AG04449 (cell line): ENCODE measurements at regions of chr12 and their contacts with region 1.

Region 1: GRCh38 chr12:127677537-127678131 is 589.3 kb upstream of the TMEM132C start:
- DNase-seq: peak; percentile 34
- H3K4me3 ChIP-seq: no peak overlapping the region
- CTCF ChIP-seq: peak; percentile 76

Region 2: GRCh38 chr12:126424696-126425095 is 1252.9 kb before region 1 on chr12:
- CTCF ChIA-PET with region 1: no interaction called
- POLR2A ChIA-PET with region 1: no interaction called
- DNase-seq: no peak
- H3K4me3 ChIP-seq: no peak overlapping the region
- CTCF ChIP-seq: no peak

Region 3: GRCh38 chr12:127108360-127109215 is 569.0 kb before region 1 on chr12:
- CTCF ChIA-PET with region 1: interaction called, 27 read pairs
- POLR2A ChIA-PET with region 1: no interaction called
- DNase-seq: no peak
- H3K4me3 ChIP-seq: no peak overlapping the region
- CTCF ChIP-seq: peak; percentile 63

Region 4: GRCh38 chr12:127455347-127456265 is 222.0 kb before region 1 on chr12:
- CTCF ChIA-PET with region 1: interaction called, 11 read pairs
- POLR2A ChIA-PET with region 1: no interaction called
- DNase-seq: no peak
- H3K4me3 ChIP-seq: peak overlapping the region; percentile 38
- CTCF ChIP-seq: peak; percentile 9

Region 5: DNA sequence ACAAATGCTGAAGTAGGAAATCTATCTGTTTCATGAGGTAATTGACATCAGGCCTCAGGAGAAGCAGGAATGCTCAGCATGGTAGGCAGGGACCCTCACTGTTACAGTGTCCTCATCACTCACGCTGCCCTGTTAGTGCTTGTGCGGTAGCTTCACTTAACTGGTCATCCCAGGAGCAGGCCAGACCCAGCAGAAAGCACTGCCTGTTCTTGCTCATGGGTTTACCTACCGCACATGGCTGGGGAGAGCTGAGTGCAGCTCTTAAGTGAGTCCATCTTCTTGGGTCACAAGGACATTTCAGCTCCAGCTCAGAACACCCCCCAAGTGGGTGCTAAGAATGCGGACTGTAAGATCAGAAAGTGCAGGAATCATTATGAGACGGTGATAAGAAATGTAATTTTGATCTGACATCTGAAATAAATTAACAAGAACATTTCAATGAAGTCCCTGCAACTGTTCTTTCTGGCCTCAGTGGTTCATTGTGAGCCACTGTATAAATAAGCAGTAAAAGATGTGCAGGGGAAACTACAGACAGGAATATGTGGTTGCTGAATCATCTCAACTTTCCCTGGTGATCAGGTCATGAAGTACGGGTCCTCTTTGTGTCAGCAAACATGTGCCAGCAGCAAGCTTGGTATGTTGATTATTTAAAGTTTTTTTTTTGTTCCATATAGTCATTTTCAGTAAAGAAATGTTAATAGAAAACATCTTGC is 168.4 kb before region 1 on chr12:
- CTCF ChIA-PET with region 1: interaction called, 27 read pairs
- POLR2A ChIA-PET with region 1: no interaction called
- DNase-seq: peak; percentile 96
- H3K4me3 ChIP-seq: no peak overlapping the region
- CTCF ChIP-seq: no peak

Region 6: DNA sequence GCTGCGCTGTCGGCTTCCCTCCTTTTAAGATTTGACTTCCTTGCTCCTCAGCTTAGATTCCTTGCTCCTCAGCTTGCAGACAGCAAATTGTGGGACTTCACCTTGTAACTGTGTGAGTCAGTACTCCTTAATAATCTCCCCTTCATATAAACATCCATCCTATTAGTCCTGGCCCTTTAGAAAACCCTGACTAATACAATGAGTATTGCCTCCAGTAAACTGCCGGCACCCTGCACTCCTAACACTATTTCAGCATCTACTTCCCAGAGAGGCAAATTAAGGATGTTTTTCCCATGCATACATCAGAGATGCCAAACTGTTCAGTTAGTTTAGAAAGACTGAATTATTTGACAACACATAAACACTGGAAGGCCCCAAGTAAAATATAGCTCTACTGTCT is 21.9 kb before region 1 on chr12:
- CTCF ChIA-PET with region 1: interaction called, 10 read pairs
- POLR2A ChIA-PET with region 1: no interaction called
- DNase-seq: peak; percentile 77
- H3K4me3 ChIP-seq: no peak overlapping the region
- CTCF ChIP-seq: no peak

Region 7: GRCh38 chr12:127742231-127742630 is 64.6 kb after region 1 on chr12:
- CTCF ChIA-PET with region 1: no interaction called
- POLR2A ChIA-PET with region 1: no interaction called
- DNase-seq: no peak
- H3K4me3 ChIP-seq: no peak overlapping the region
- CTCF ChIP-seq: no peak

Region 8: GRCh38 chr12:127752802-127753201 is 75.2 kb after region 1 on chr12:
- CTCF ChIA-PET with region 1: no interaction called
- POLR2A ChIA-PET with region 1: no interaction called
- DNase-seq: no peak
- H3K4me3 ChIP-seq: no peak overlapping the region
- CTCF ChIP-seq: no peak

Region 9: GRCh38 chr12:127819056-127819455 is 141.4 kb after region 1 on chr12:
- CTCF ChIA-PET with region 1: no interaction called
- POLR2A ChIA-PET with region 1: no interaction called
- DNase-seq: peak; percentile 68
- H3K4me3 ChIP-seq: no peak overlapping the region
- CTCF ChIP-seq: no peak

Region 10: DNA sequence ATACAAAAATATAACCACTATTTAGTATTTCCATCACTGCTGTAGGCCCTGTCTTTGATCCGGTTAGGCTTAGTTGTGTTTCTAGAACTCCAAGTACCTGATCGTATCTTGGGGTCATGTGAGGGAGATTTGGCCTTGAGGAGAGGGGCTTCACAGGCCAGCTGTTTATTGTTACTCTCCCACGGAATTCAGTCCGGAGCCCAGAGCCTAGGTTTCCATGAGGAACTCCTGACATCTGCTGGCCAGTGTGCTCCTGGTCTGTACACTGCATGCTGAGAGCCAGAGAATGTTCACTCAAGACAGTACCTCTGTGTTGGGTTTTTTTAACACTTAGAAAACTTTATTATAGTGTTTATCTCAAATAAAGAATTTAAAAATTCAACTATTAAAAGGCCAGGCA is 248.3 kb after region 1 on chr12:
- CTCF ChIA-PET with region 1: interaction called, 39 read pairs
- POLR2A ChIA-PET with region 1: interaction called, 3 read pairs
- DNase-seq: no peak
- H3K4me3 ChIP-seq: no peak overlapping the region
- CTCF ChIP-seq: peak; percentile 75